ENCODE measurements at regions of chr3 and their contacts with region 1.

Region 1: GRCh38 chr3:107271787-107272387 is 105.4 kb upstream of the CCDC54 start:
- DNase-seq: peak; percentile 10
- H3K4me3 ChIP-seq: no peak overlapping the region
- CTCF ChIP-seq: peak; percentile 31

Region 2: GRCh38 chr3:107284612-107285011 is 12.7 kb after region 1 on chr3:
- CTCF ChIA-PET with region 1: interaction called, 35 read pairs
- POLR2A ChIA-PET with region 1: no interaction called
- DNase-seq: no peak
- H3K4me3 ChIP-seq: no peak overlapping the region
- CTCF ChIP-seq: no peak

Region 3: DNA sequence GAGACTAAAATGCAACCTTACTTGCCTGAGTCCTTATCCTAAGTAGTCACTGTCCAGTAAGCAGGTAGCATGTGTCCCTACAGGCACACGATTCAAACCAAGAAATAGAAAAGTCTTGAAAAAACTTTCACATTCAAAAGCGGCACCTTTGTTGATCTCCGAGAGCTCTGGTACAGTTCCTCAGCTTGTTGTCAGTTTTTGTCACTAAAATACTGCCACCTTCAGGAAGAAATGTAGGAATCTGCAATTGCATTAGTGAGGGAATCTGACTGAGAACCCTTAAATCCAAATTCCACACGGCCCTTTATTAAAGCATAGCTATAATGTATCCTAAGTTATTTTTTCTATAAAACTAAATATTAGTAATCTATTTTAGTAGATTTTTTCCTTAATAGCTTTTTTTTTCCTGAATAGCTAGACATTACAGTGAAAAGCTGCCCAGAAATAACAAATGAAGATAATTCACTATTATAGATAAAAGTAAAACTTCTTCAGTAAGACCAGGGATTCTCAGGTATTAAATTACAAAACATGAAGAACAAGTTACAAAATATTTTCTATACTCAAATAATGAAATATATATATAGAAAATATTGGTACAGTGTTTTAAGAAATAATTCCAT is 149.4 kb after region 1 on chr3:
- CTCF ChIA-PET with region 1: interaction called, 287 read pairs
- POLR2A ChIA-PET with region 1: no interaction called
- DNase-seq: no peak
- H3K4me3 ChIP-seq: peak overlapping the region; percentile 49
- CTCF ChIP-seq: peak; percentile 61

Region 4: GRCh38 chr3:107452436-107452835 is 180.5 kb after region 1 on chr3:
- CTCF ChIA-PET with region 1: interaction called, 26 read pairs
- POLR2A ChIA-PET with region 1: no interaction called
- DNase-seq: no peak
- H3K4me3 ChIP-seq: no peak overlapping the region
- CTCF ChIP-seq: no peak

Region 5: DNA sequence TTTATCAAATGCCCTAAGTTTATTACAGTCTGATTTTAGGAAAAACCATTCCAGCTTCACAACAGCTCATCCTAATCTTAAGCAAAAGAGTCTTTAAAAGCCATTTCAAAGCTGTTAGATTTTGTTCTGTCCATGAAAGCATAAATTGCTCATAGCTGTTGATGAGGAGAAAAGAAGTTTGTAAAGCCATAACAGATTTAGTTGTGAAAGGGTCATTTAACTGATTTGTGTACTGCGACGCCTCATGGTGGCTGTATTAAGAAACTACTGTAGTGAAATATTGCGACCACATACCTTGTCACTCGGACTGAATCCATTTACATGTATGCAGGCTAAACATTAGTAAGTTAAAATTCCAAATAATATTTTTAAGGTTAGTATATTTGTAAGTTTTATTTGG is 271.8 kb after region 1 on chr3:
- CTCF ChIA-PET with region 1: interaction called, 11 read pairs
- POLR2A ChIA-PET with region 1: no interaction called
- DNase-seq: no peak
- H3K4me3 ChIP-seq: no peak overlapping the region
- CTCF ChIP-seq: no peak

Measured in AG04449 (cell line).